IMR-90 (cell line): ENCODE measurements at regions of chr1 and their contacts with region 1.

Region 1: DNA sequence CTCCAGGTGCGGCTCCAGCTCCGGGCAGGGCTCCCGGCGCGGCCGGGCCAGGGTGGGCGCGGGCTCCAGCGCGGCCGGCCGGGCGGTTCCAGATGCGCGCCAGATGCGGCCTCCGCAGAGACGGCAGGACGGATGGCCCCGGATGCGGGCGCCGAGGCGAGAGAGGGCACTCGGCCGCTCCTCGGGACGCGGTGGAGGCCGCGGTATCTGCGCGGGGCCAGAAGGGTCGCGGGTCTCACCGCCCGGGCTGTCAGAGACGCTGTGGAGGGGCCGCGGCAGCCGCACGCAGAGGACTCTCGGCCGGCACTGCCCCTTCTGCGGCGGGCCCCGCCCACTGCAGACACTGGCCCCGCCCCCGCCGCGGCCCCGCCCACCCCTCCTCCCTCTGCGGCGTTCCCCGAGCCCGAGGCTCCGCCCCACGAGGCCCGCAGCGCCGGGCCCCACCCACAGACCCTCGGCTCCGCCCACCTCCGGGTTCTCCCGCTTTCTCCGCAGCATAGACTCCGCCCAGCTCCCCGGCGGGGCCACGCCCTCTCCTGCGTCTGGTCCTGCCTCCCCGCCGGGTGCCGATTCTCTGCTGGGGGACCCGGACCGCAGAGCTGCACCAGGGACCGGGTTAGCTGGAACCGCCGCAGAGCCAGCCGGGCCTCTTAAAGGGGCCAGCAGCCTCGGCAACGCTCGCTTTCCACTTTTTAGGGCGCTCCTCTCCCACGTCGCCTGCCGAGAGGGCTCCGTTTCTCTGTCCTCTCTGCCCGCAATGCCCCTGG is at the start of gene IFFO2:
- DNase-seq: peak; percentile 90
- ATAC-seq: peak; percentile 97
- H3K4me3 ChIP-seq: peak within 1 kb of the TSS; percentile 95
- H3K27ac ChIP-seq: peak within 1 kb of the TSS; percentile 70
- H3K4me1 ChIP-seq: peaks cover 16% of the 10 kb centered on the region
- H3K27me3 ChIP-seq: peaks cover 6% of the 10 kb centered on the region; the same call in 1 of the 2 replicates
- CTCF ChIP-seq: no peak
- POLR2A ChIP-seq: peak; percentile 82
- RAD21 ChIP-seq: 0 out of 2 replicates have a peak, but pooled peaks have one; percentile 14
- total RNA-seq, gene IFFO2: 13.6 and 14.5 TPM in 2 replicates

Region 2: DNA sequence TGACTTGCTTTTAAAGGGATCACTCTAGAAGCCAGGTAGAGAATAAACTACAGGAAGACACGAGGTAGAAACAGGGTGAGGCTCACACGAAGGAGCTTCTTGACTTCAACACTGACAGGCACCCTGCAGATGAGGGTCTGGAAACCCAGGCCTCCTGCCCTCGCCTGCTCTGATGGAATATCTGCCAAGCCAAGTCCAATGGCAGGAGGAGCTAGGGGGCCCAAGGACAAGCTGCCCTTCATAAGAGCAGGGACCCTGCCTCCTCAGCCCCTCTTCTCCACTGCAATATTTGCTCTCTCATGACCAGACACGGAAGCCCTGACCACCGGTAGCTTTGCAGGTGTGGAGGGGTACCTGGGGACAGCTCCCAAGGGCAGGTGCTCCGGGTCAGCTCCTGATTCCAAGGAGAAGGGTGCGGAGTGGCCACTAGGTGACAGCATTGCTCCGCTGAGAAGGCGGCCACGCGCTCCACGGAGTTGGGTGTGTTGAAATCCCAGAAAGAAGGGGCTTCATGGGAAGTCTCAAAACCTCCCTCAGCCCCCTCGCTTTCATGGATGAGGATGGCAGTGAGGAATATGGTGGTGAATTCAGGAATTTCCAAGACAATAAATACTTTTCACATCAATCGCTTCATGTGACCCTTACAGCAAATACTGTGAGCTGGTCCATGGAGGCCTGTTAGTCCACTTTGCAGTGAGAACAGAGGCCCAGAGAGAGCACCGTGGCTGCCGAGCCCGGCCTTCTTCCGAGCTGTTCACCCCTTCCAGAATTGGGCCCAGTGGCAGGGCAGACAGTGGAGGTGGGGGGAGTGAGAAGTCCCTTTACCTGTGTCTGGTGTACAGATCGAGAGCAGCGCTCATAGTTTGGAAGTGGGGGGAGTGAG is 359.2 kb before region 1 on chr1:
- CTCF ChIA-PET with region 1: no interaction called
- POLR2A ChIA-PET with region 1: no interaction called
- dilution Hi-C with region 1: no loop called
- in situ Hi-C with region 1: no loop called
- intact Hi-C with region 1: no loop called
- DNase-seq: peak; percentile 25
- ATAC-seq: peak; percentile 85
- H3K4me3 ChIP-seq: no peak overlapping the region
- H3K27ac ChIP-seq: no peak overlapping the region
- H3K4me1 ChIP-seq: no peaks in the 10 kb centered on the region
- H3K27me3 ChIP-seq: peaks cover 2% of the 10 kb centered on the region; the same call in 1 of the 2 replicates
- CTCF ChIP-seq: peak; percentile 88
- POLR2A ChIP-seq: no peak
- RAD21 ChIP-seq: peak; percentile 93

Region 3: DNA sequence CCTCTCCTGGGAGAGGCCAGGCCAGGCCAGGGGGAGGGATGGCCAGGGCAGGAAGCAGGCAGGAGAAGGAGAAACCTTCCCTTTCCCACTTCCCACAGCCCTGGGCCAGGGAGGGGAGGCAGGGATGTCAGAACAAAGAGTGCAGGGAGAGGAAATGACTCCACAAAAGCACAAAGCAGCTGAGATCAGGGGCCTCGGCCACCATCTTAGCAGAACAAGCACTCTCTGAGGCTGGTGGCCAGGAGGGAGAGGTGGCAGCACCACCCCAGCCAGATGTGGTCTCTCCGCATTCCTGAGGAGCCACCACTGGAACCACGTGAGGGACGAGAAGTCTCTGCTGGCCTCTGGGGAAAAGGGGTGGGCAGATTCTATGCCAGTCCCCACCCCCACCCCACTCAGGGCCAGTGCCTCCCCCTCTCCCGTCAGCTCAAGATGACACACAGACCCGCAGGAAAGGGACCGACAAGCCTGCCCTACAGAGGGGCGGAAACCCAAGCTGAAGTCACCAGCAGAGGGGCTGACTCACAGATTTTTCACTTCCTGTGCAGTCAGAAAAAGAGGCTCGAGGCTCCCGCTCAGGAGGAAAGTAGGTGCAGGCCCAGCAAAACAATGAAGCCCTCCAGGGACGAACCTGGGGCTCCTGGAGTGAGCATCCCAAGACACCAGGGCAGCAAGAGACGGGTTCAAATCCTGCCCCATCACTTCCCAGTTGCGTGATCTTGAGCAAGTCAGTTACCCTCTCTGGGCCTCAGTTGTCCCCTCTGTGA is 30.1 kb before region 1 on chr1:
- CTCF ChIA-PET with region 1: interaction called, 3 read pairs
- POLR2A ChIA-PET with region 1: interaction called, 4 read pairs
- dilution Hi-C with region 1: no loop called
- in situ Hi-C with region 1: no loop called
- intact Hi-C with region 1: loop called (anchors 2 kb)
- DNase-seq: peak; percentile 96
- ATAC-seq: peak; percentile 82
- H3K4me3 ChIP-seq: no peak overlapping the region
- H3K27ac ChIP-seq: peak overlapping the region; percentile 94
- H3K4me1 ChIP-seq: peaks cover 57% of the 10 kb centered on the region
- H3K27me3 ChIP-seq: no peaks in the 10 kb centered on the region
- CTCF ChIP-seq: no peak
- POLR2A ChIP-seq: no peak
- RAD21 ChIP-seq: no peak

Region 4: DNA sequence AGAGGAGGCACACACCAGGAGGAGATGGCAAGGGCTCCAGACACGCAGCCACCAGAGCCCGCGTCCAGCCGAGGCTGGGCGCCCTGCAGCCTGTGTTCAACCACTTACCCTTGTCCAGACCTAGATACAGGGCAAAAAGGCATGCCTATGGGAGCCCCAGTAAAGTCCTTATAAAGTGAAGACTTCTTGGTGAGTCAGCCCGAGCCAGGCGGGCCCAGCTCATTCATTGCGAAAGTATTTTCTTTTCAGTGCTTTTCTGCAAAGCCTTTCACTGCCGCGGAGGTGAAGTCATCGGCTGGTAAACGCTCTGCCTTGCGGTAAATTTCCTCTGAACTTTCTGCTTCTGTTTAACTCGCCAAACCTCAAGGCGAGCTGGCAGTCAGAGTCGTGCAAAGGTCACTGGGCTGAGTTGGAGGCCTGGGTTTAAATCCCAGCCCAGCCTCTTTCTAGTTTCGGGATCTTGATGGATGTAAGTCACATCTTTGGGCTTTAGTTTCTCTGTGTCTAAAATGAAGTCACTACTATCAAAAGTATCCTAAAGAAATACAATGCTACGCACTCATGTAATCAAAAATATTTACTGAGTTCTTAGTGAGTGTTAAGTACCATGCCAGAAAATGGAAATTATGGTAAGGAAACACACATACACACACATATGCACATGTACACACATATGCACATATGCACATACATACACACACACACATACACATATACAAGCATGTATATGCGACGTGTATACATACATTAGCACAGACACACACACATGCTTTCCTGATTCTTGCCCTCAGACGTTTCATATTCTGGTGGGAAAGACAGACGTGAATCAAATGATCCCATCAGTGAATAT is 54.7 kb after region 1 on chr1:
- CTCF ChIA-PET with region 1: no interaction called
- POLR2A ChIA-PET with region 1: no interaction called
- dilution Hi-C with region 1: no loop called
- in situ Hi-C with region 1: no loop called
- intact Hi-C with region 1: loop called (anchors 5 kb)
- DNase-seq: peak; percentile 97
- ATAC-seq: peak; percentile 91
- H3K4me3 ChIP-seq: no peak overlapping the region
- H3K27ac ChIP-seq: peak overlapping the region; percentile 86
- H3K4me1 ChIP-seq: peaks cover 26% of the 10 kb centered on the region
- H3K27me3 ChIP-seq: no peaks in the 10 kb centered on the region
- CTCF ChIP-seq: no peak
- POLR2A ChIP-seq: peak; percentile 61; the same call in 1 of the 2 replicates
- RAD21 ChIP-seq: peak; percentile 12

Region 5: GRCh38 chr1:19021845-19022244 is 65.3 kb after region 1 on chr1:
- CTCF ChIA-PET with region 1: no interaction called
- POLR2A ChIA-PET with region 1: no interaction called
- dilution Hi-C with region 1: no loop called
- in situ Hi-C with region 1: no loop called
- intact Hi-C with region 1: no loop called
- DNase-seq: no peak
- ATAC-seq: no peak
- H3K4me3 ChIP-seq: no peak overlapping the region
- H3K27ac ChIP-seq: no peak overlapping the region
- H3K4me1 ChIP-seq: no peaks in the 10 kb centered on the region
- H3K27me3 ChIP-seq: no peaks in the 10 kb centered on the region
- CTCF ChIP-seq: no peak
- POLR2A ChIP-seq: no peak
- RAD21 ChIP-seq: no peak

Region 6: GRCh38 chr1:19087737-19088594 is 131.4 kb after region 1 on chr1:
- CTCF ChIA-PET with region 1: no interaction called
- POLR2A ChIA-PET with region 1: no interaction called
- dilution Hi-C with region 1: no loop called
- in situ Hi-C with region 1: no loop called
- intact Hi-C with region 1: loop called (anchors 2 kb)
- DNase-seq: peak; percentile 14
- ATAC-seq: no peak
- H3K4me3 ChIP-seq: no peak overlapping the region
- H3K27ac ChIP-seq: peak overlapping the region; percentile 35; the same call in 1 of the 2 replicates
- H3K4me1 ChIP-seq: peaks cover 33% of the 10 kb centered on the region
- H3K27me3 ChIP-seq: no peaks in the 10 kb centered on the region
- CTCF ChIP-seq: no peak
- POLR2A ChIP-seq: no peak
- RAD21 ChIP-seq: no peak

Region 7: DNA sequence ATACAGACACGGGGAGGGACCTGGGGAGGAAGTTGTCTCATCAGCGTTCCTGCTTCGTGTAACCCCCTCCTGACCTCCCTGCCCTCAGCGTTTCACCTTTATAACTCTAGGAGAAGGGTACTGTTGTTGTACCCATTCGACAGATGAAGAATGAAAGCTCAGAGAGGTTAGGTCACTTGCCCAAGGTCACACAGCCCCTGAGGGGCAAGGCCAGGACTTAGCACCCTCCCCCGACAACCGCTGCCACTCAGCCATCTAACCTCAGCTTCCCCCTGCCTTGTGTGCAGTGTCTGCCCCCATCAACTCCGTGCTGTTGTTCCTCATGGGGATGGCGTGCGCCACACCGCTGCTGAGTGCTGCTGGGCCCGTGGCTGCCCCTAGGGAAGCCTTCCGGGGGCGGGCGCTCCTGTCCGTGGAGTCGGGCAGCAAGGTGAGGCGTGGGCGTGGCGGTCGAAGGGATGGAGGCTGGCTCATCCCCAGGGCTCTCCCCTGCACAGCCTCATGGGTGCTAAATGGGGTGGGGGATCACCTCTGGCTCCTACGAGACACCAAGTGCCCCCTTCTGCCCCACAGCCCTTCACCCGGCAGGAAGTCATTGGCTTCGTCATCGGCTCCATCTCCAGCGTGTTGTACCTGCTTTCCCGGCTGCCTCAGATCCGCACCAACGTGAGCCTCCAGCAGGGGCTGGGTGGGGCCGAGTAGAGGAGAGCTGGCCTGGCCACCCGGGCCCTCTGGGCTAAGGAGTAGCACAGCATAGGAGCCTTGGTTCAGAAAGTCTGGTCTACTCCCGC is 369.6 kb after region 1 on chr1:
- CTCF ChIA-PET with region 1: no interaction called
- POLR2A ChIA-PET with region 1: no interaction called
- dilution Hi-C with region 1: no loop called
- in situ Hi-C with region 1: no loop called
- intact Hi-C with region 1: no loop called
- DNase-seq: no peak
- ATAC-seq: no peak
- H3K4me3 ChIP-seq: no peak overlapping the region
- H3K27ac ChIP-seq: no peak overlapping the region
- H3K4me1 ChIP-seq: no peaks in the 10 kb centered on the region
- H3K27me3 ChIP-seq: no peaks in the 10 kb centered on the region
- CTCF ChIP-seq: no peak
- POLR2A ChIP-seq: no peak
- RAD21 ChIP-seq: no peak